ENCODE measurements at regions of chr5 and their contacts with region 1.

Region 1: DNA sequence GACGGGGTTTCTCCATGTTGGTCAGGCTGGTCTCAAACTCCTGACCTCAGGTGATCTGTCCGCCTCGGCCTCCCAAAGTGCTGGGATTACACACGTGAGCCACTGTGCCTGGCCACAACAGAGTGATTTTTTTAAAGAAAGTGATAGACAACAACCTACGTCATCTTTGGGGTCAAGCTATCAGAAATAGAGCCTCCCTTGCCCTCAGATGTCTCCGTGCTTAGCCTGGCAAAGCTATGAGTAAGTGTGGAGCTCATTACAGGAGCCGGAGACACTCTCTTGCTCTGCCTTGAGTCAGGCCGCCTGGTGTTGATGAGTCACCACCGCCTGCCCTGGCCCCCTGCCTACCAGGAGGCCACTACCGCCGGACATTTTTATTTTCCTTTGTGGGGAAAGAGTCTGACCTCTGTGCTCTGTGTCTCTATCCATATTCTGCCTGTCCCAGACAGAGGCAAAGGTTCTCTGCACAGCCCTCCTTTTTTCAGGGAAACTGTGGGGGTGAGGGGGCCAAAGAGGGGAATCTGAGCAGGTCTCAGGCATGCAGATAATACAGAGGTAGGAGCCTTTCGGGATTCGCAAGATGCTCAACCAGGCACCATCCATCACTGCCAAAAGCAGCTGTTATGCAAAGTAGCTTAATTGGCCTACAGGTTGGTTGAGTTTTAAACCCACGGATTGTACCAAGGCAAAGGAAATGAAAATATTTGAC is 123.7 kb upstream of the CPEB4 start:
- DNase-seq: peak; percentile 66 to 90 (median 86)
- ATAC-seq: peak; percentile 11 to 76 (median 67)
- H3K4me3 ChIP-seq: no peak overlapping the region
- H3K27ac ChIP-seq: peak overlapping the region in 11 of 12 donors; percentile 68 to 95 (median 78)
- H3K4me1 ChIP-seq: peaks cover 0 to 40% (median 19%) of the 10 kb centered on the region in 12 donors
- H3K27me3 ChIP-seq: no peaks in the 10 kb centered on the region
- CTCF ChIP-seq: peak in 1 of 12 donors; percentile 8
- POLR2A ChIP-seq: no peak

Region 2: DNA sequence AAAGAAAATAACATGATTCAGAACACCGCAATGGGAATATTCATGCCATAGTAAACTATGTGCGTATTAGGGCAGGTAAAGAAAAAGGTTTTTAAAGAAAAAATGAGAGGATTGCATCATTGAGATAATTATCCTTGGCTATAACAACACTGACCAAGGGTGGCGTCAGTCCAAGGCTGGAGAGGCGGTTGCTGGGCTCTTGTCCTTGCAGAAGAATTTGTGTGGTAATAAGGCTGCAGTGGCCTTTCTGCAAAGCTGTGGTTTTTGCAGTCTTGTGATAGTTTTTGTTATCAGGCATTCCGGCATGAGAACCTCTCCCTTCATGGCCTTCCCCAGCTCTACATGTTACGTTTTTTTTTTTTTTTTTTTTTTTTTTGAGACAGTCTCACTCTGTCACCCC is 162.1 kb before region 1 on chr5:
- intact Hi-C with region 1: no loop called
- DNase-seq: peak in 1 of 5 donors; percentile 44
- ATAC-seq: peak; percentile 21 to 51 (median 40)
- H3K4me3 ChIP-seq: no peak overlapping the region
- H3K27ac ChIP-seq: no peak overlapping the region
- H3K4me1 ChIP-seq: peaks cover 0 to 10% (median 3%) of the 10 kb centered on the region in 12 donors
- H3K27me3 ChIP-seq: no peaks in the 10 kb centered on the region
- CTCF ChIP-seq: peak in 1 of 12 donors; percentile 6
- POLR2A ChIP-seq: no peak

Region 3: GRCh38 chr5:173615884-173616576 is 148.4 kb before region 1 on chr5:
- intact Hi-C with region 1: loop called in 1 of 10 experiments (anchors 5 kb)
- DNase-seq: peak; percentile 52 to 70 (median 57)
- ATAC-seq: peak in 3 of 4 donors; percentile 43 to 70 (median 64)
- H3K4me3 ChIP-seq: peak overlapping the region; percentile 67 to 98 (median 90)
- H3K27ac ChIP-seq: peak overlapping the region; percentile 85 to 95 (median 91)
- H3K4me1 ChIP-seq: peaks cover 0 to 56% (median 36%) of the 10 kb centered on the region in 12 donors
- H3K27me3 ChIP-seq: no peaks in the 10 kb centered on the region
- CTCF ChIP-seq: peak; percentile 25 to 79 (median 58)
- POLR2A ChIP-seq: no peak

Region 4: DNA sequence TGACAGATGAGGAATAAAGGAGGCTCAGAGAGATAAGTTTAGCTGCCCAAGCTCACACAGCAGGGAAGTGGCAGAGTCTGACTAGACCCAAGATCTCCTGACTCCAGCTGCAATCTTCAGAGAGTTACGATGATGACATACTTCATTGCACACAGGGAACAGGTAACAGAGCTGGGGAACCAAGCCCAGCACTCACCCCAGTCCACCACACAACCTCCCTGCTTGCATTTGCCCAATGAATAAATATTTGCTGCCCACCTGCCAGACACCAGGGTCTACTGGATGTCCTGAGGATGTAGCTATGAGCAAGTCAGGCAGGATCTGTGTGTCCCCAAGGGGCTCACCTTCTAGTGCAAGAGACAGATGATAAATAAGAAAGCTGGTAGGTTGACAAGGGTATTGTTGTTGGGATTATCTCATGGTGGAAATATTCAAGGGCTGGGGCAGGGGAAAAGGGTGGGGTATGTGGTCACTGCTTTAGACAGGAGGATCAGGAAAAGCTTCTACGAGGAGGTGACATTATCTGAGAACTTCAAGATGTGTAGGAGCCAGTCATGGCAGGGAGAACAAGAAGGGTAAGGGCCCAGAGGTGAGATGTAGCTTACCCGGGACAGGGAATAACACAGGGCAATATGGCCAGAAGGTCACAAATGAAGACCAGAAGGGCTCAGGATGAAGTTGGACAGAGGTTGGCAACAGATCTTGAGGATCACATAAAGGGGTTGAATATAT is 95.1 kb after region 1 on chr5:
- intact Hi-C with region 1: loop called in 3 of 10 experiments (anchors 5 kb)
- DNase-seq: no peak
- ATAC-seq: peak in 2 of 4 donors; percentile 7 to 31
- H3K4me3 ChIP-seq: no peak overlapping the region
- H3K27ac ChIP-seq: peak overlapping the region in 8 of 12 donors; percentile 39 to 87 (median 68)
- H3K4me1 ChIP-seq: peaks cover 0 to 24% (median 14%) of the 10 kb centered on the region in 12 donors
- H3K27me3 ChIP-seq: no peaks in the 10 kb centered on the region
- CTCF ChIP-seq: no peak
- POLR2A ChIP-seq: no peak

Region 5: DNA sequence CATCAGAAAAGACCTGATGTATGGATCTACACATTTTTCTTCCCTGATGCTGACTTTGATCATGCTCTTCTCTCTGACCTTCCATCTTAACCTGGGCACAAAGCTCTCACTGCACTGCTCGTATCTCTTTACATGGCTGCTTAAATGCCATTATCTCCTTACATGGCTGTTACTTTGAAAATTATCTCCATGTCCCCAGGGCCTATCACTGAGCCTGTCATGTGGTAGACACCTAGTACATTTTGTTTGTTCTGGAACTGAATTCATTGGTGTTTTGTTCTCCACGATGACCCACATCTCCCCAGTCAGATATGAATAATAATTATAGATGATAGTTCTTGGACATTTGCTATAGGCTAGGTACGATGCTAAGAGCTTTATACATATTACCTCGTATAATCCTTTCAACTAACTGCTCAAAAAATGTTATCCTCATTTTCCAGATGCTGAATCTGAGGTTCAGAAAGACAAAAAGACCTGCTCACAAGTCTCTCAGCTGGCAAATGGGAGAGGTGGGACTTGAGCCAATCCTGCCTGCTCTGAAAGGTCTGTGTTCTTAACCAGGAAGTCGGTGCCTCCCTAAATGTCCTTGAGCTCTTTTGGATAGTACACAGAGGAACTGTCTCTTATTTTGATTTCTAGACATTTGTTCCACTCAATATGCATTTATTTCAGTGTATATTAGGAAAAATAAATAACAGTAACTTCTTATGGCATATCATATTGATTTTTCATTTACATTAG is 113.9 kb after region 1 on chr5:
- intact Hi-C with region 1: loop called in 1 of 10 experiments (anchors 1 kb)
- DNase-seq: peak in 4 of 5 donors; percentile 51 to 80 (median 63)
- ATAC-seq: peak; percentile 87 to 93 (median 92)
- H3K4me3 ChIP-seq: no peak overlapping the region
- H3K27ac ChIP-seq: peak overlapping the region; percentile 7 to 80 (median 58)
- H3K4me1 ChIP-seq: peaks cover 0 to 24% (median 11%) of the 10 kb centered on the region in 12 donors
- H3K27me3 ChIP-seq: no peaks in the 10 kb centered on the region
- CTCF ChIP-seq: no peak
- POLR2A ChIP-seq: peak in 1 of 2 donors; percentile 3

Region 6: GRCh38 chr5:173963867-173964441 is 199.5 kb after region 1 on chr5:
- intact Hi-C with region 1: loop called in 2 of 10 experiments (anchors 10 kb)
- DNase-seq: no peak
- ATAC-seq: peak; percentile 1 to 43 (median 18)
- H3K4me3 ChIP-seq: peak overlapping the region in 1 of 12 donors; percentile 8
- H3K27ac ChIP-seq: peak overlapping the region in 10 of 12 donors; percentile 5 to 74 (median 58)
- H3K4me1 ChIP-seq: peaks cover 0 to 31% (median 3%) of the 10 kb centered on the region in 12 donors
- H3K27me3 ChIP-seq: no peaks in the 10 kb centered on the region
- CTCF ChIP-seq: no peak
- POLR2A ChIP-seq: no peak

Region 7: GRCh38 chr5:174078416-174078815 is 313.9 kb after region 1 on chr5:
- intact Hi-C with region 1: no loop called
- DNase-seq: no peak
- ATAC-seq: no peak
- H3K4me3 ChIP-seq: no peak overlapping the region
- H3K27ac ChIP-seq: no peak overlapping the region
- H3K4me1 ChIP-seq: no peaks in the 10 kb centered on the region
- H3K27me3 ChIP-seq: peaks cover 0 to 3% (median 0%) of the 10 kb centered on the region in 9 donors
- CTCF ChIP-seq: no peak
- POLR2A ChIP-seq: no peak

Measured in heart left ventricle (tissue), 16 donors.